Sigmoid colon (tissue), 7 donors: ENCODE measurements at regions of chr18 and their contacts with region 1.

Region 1: GRCh38 chr18:9614401-9615279 is at the start of gene PPP4R1:
- DNase-seq: peak; percentile 90
- H3K4me3 ChIP-seq: peak within 1 kb of the TSS; percentile 60 to 98 (median 92)
- H3K27ac ChIP-seq: peak within 1 kb of the TSS; percentile 96 to 99 (median 98)
- H3K4me1 ChIP-seq: peaks cover 0 to 47% (median 37%) of the 10 kb centered on the region in 4 donors
- H3K27me3 ChIP-seq: no peaks in the 10 kb centered on the region
- CTCF ChIP-seq: no peak
- EP300 ChIP-seq: no peak
- POLR2A ChIP-seq: no peak
- total RNA-seq, gene PPP4R1: 126 to 163 (median 153) TPM

Region 2: DNA sequence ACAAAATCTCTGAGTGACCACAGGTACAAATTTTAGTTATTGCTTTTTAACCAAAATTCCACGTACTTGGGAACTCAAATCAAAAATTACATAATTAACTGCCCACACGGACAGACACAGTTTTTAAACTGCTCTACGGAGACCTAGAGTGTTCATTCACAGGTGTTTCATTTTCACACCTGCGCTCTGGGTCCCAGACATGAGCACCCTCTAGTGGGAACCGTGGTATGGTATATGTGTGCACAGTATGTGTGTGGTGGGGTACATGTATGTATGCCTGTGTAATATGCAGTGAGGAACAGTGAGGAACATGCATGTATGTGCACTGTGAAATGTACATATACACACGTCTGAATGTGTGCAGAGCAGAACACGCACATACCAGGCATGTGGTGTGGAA is 65.2 kb before region 1 on chr18:
- intact Hi-C with region 1: no loop called
- DNase-seq: no peak
- H3K4me3 ChIP-seq: no peak overlapping the region
- H3K27ac ChIP-seq: no peak overlapping the region
- H3K4me1 ChIP-seq: peaks cover 0 to 26% (median 9%) of the 10 kb centered on the region in 4 donors
- H3K27me3 ChIP-seq: no peaks in the 10 kb centered on the region
- CTCF ChIP-seq: no peak
- EP300 ChIP-seq: no peak
- POLR2A ChIP-seq: no peak

Region 3: DNA sequence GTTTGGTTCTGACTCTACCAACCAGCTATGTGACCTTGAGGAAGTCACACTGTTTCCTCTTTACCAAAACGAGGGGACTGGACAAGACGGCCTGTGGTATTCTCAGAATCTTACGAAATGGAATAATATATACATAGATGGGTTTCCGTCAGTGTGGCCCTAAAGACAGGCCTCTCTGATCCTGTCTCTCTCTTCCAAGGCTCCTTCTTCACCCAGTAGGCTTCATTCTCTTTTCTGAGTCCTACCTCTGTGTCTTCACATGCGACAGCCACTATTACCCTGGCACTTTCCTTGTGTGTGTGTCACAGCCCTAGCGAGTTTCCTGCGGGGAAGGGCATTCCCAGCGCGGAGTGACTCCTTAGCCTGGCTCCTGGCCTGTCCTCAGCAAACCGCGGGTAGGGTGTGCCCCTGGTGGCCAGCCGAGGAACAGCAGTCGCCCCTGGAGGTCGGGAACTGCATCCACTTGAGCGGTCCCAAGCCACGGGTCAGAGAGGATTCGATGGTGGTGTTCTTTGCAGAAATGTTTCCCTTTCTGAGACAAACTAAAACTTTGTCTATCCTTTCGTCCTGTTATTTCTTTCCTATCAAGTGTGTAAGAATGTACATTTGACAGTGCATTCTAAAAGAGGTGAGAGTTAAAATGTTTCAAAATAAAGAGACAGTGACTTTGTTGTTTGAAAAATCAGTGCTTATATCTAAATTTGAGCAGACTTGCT is 156.8 kb after region 1 on chr18:
- intact Hi-C with region 1: loop called (anchors 10 kb)
- DNase-seq: peak; percentile 90
- H3K4me3 ChIP-seq: no peak overlapping the region
- H3K27ac ChIP-seq: peak overlapping the region in 3 of 4 donors; percentile 18 to 57 (median 19)
- H3K4me1 ChIP-seq: peaks cover 0 to 37% (median 12%) of the 10 kb centered on the region in 4 donors
- H3K27me3 ChIP-seq: no peaks in the 10 kb centered on the region
- CTCF ChIP-seq: peak; percentile 83 to 96 (median 93)
- EP300 ChIP-seq: peak in 1 of 4 donors; percentile 68
- POLR2A ChIP-seq: no peak

Region 4: DNA sequence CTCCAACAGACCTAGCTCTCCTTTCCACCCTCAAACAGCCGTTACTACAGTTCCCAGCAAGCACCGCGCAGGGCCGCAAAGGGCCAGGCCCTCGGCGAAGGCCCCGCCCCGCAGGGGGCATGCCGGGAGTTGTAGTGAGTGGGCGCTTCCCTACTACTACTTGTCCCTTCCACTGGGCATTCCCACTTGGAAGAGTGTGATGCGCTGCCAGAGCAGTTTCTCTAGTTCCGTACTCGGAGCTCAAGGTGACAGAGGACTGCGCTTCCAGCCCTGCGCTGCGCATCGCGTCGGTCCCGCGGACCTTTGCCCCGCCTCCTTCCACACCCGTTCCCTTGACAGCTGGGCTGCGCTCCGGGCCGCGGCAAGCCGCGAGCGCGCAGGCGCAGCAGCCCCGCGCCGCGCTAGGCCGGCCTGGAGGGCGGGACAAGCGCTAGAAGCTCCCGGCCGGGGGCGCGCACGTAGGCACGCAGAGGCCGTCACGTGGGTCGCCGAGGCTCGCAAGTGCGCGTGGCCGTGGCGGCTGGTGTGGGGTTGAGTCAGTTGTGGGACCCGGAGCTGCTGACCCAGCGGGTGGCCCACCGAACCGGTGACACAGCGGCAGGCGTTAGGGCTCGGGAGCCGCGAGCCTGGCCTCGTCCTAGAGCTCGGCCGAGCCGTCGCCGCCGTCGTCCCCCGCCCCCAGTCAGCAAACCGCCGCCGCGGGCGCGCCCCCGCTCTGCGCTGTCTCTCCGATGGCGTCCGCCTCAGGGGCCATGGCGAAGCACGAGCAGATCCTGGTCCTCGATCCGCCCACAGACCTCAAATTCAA is 299.1 kb after region 1 on chr18 and contains the start of gene VAPA:
- intact Hi-C with region 1: loop called (anchors 5 kb)
- DNase-seq: peak; percentile 98
- H3K4me3 ChIP-seq: peak within 1 kb of the TSS; percentile 89 to 95 (median 90)
- H3K27ac ChIP-seq: peak within 1 kb of the TSS; percentile 98 to 100 (median 100)
- H3K4me1 ChIP-seq: peaks cover 0 to 41% (median 34%) of the 10 kb centered on the region in 4 donors
- H3K27me3 ChIP-seq: no peaks in the 10 kb centered on the region
- CTCF ChIP-seq: no peak
- EP300 ChIP-seq: no peak
- POLR2A ChIP-seq: peak; percentile 95
- total RNA-seq, gene VAPA: 252 to 336 (median 291) TPM

Region 5: DNA sequence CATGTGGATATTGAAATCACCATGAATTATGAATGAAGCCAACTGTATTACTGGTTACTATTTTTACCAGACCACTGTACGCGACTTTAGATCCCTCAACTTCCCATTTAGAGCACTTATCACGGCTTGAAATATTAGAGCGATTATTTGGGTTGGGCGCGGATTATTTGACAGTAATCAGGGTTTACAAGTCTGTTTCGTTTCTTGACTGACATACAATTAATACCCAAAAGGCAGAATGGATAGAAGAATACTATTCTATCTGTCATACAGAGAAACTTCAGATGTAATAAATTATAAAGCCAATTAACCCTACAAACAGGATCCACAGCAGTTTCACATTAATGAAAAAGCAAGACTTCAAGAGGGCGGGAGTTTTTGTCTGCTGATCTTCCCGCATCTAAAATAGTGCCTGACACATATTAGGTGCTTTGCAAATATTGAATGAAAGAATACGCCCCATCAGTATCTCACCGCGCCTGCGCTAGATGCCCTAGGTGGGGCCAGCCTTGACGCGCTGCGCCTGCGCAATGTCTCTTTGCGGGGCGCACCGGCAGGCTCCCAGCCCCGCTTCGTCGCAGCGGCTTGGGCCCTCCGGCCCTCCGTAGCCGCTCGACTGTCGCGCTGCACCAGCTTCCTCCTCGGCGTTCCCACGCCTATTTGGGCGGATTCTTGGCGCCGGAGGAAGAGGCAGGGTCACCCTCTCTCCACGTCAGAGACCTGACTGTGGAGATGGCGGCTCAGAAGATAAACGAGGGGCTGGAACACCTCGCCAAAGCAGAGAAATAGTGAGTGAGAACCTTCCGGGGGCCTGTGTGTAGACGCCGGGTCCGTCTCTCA is 911.0 kb after region 1 on chr18 and contains the start of gene NAPG:
- intact Hi-C with region 1: loop called (anchors 10 kb)
- DNase-seq: peak; percentile 96
- H3K4me3 ChIP-seq: peak within 1 kb of the TSS; percentile 78 to 93 (median 87)
- H3K27ac ChIP-seq: peak within 1 kb of the TSS; percentile 91 to 95 (median 92)
- H3K4me1 ChIP-seq: peaks cover 0 to 52% (median 31%) of the 10 kb centered on the region in 4 donors
- H3K27me3 ChIP-seq: no peaks in the 10 kb centered on the region
- CTCF ChIP-seq: no peak
- EP300 ChIP-seq: peak in 1 of 4 donors; percentile 34
- POLR2A ChIP-seq: no peak
- total RNA-seq, gene NAPG: 33.7 to 43.5 (median 36.8) TPM